CD4-positive, alpha-beta T cell (primary cell): ENCODE measurements at regions of chr16 and their contacts with region 1.

Region 1: GRCh38 chr16:89009311-89010209 is 32.6 kb upstream of the CBFA2T3 start:
- DNase-seq: peak in 8 of 14 experiments; percentile 16 to 69 (median 24)
- ATAC-seq: peak; percentile 39
- H3K4me3 ChIP-seq: no peak overlapping the region
- H3K4me3 Mint-ChIP-seq: no peak overlapping the region
- H3K27ac ChIP-seq: no peak overlapping the region
- H3K27ac Mint-ChIP-seq: no peak overlapping the region
- H3K4me1 ChIP-seq: no peaks in the 10 kb centered on the region
- H3K4me1 Mint-ChIP-seq: no peaks in the 10 kb centered on the region
- H3K27me3 ChIP-seq: peaks cover 18 to 26% of the 10 kb centered on the region in 2 experiments
- H3K27me3 Mint-ChIP-seq: peaks cover 32% of the 10 kb centered on the region
- CTCF ChIP-seq: no peak

Region 2: DNA sequence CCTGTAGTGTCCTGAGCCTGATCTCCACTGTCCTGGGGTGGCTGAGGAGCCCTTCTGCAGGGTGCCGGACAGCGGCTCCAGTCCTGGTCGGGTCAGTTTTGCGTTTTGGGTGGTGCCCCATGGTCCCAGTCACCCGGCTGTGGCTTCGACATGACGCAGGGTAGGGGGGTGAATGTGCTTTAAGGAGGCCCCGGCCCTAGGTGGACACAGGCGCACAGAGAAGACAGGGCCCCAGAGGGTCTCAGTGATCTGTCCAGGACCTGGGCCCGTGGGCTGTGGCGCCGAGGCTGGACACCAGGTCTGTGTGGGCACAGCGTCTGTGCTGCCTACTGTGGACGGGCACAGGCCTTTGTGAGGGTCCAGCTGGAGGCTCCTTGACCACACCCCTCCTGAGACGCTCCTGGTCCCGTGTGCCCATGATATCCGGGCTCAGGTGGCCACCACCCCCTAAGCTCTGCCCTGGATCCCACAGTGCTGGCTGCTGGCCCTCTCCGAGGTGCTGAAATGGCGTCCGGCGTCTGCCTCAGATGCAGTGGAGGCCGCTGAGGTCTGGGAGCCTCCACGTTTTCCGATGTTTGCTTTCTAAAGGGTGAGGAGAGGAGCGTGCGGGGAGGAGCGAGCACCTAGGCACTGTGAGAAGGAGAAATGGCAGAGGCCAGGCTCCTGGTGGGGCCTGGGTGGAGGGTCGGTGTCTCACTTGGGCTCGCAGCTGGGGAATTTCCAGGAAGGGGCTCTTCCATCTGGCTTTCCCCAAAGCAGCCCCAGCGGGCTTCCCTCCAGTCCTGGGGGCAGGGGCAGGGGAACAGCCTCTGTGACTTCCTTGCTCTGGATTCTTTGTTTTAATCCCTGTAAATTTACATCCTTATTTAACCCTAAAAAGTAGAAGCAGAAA is 27.9 kb after region 1 on chr16:
- CTCF ChIA-PET with region 1: no interaction called
- POLR2A ChIA-PET with region 1: no interaction called
- intact Hi-C with region 1: loop called in 1 of 2 experiments (anchors 2 kb)
- DNase-seq: peak in 9 of 14 experiments; percentile 16 to 58 (median 25)
- ATAC-seq: peak; percentile 73
- H3K4me3 ChIP-seq: no peak overlapping the region
- H3K4me3 Mint-ChIP-seq: no peak overlapping the region
- H3K27ac ChIP-seq: no peak overlapping the region
- H3K27ac Mint-ChIP-seq: no peak overlapping the region
- H3K4me1 ChIP-seq: peaks cover 33% of the 10 kb centered on the region
- H3K4me1 Mint-ChIP-seq: peaks cover 34% of the 10 kb centered on the region
- H3K27me3 ChIP-seq: peaks cover 0 to 4% of the 10 kb centered on the region in 2 experiments
- H3K27me3 Mint-ChIP-seq: no peaks in the 10 kb centered on the region
- CTCF ChIP-seq: no peak

Region 3: GRCh38 chr16:89049461-89050118 is 40.0 kb after region 1 on chr16:
- CTCF ChIA-PET with region 1: no interaction called
- POLR2A ChIA-PET with region 1: no interaction called
- intact Hi-C with region 1: loop called in 1 of 2 experiments (anchors 5 kb)
- DNase-seq: no peak
- ATAC-seq: no peak
- H3K4me3 ChIP-seq: no peak overlapping the region
- H3K4me3 Mint-ChIP-seq: no peak overlapping the region
- H3K27ac ChIP-seq: no peak overlapping the region
- H3K27ac Mint-ChIP-seq: no peak overlapping the region
- H3K4me1 ChIP-seq: peaks cover 16% of the 10 kb centered on the region
- H3K4me1 Mint-ChIP-seq: no peaks in the 10 kb centered on the region
- H3K27me3 ChIP-seq: no peaks in the 10 kb centered on the region
- H3K27me3 Mint-ChIP-seq: no peaks in the 10 kb centered on the region
- CTCF ChIP-seq: no peak